ENCODE measurements at regions of chr2 and their contacts with region 1.

Region 1: DNA sequence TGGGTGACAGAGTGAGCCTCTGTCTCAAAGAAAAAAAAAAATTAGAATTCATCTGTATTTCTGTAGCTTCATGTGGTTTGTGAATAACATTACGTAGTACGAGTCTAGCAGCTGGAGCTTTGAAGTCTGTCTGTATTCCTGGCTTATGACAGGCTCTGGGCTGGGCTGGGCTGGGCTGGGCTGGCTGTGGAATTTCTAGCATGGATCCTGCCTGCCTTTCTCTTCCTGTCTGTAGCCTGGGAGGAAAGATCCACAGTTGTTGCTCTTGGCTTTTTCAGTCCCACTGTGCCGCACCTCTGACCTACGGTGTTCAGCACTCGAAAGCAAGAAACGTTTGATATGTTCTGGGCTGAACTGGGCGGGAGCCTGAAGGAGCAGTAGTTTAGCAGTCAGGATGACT is 55.4 kb downstream of the BOLA3 start:
- DNase-seq: no peak
- H3K4me3 Mint-ChIP-seq: no peak overlapping the region
- H3K27ac Mint-ChIP-seq: no peak overlapping the region
- H3K4me1 Mint-ChIP-seq: no peaks in the 10 kb centered on the region
- H3K27me3 Mint-ChIP-seq: no peaks in the 10 kb centered on the region

Region 2: GRCh38 chr2:74119912-74120825 is 27.9 kb after region 1 on chr2:
- intact Hi-C with region 1: loop called (anchors 1 kb)
- DNase-seq: peak; percentile 96
- H3K4me3 Mint-ChIP-seq: peak overlapping the region; percentile 88
- H3K27ac Mint-ChIP-seq: peak overlapping the region; percentile 92
- H3K4me1 Mint-ChIP-seq: peaks cover 9% of the 10 kb centered on the region
- H3K27me3 Mint-ChIP-seq: peaks cover 7% of the 10 kb centered on the region